Adrenal gland (tissue), 19 donors: ENCODE measurements at regions of chr3 and their contacts with region 1.

Region 1: DNA sequence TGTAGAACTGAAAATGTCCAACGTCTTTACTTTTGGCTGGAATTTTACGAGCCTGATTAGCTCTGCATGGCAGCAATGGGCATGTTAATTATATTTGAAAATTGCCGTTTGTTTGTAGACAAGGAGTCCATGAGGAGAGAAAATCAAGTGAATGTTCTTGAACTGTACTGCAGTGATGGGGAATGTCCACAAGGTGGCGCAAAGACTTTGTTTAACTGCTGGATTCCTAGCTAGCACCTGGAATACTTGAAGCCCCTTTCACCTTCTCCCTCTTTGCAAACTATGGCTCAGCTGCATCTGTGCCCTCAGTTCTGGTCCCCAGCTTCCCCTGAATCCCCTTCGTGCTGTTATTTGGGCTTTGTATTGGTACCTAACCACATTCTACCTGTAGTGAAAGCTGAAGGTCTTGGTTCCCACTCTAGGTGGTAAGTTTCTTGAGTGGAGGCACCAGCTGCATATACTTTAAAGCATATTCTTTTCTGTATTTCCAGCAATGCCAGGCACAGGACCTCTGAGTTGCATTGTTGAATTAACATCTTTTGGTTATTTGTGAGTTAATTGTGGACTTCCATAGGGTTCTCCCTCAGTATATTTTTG is 25.3 kb downstream of the EXOG start:
- DNase-seq: peak; percentile 54 to 90 (median 72)
- H3K4me3 ChIP-seq: no peak overlapping the region
- H3K27ac ChIP-seq: no peak overlapping the region
- H3K4me1 ChIP-seq: no peaks in the 10 kb centered on the region
- H3K27me3 ChIP-seq: no peaks in the 10 kb centered on the region
- CTCF ChIP-seq: peak; percentile 81 to 94 (median 86)
- POLR2A ChIP-seq: no peak

Region 2: GRCh38 chr3:38651154-38651789 is 129.8 kb after region 1 on chr3:
- intact Hi-C with region 1: loop called (anchors 5 to 10 kb)
- DNase-seq: peak; percentile 51 to 83 (median 73)
- H3K4me3 ChIP-seq: no peak overlapping the region
- H3K27ac ChIP-seq: no peak overlapping the region
- H3K4me1 ChIP-seq: peaks cover 6 to 10% of the 10 kb centered on the region in 2 donors
- H3K27me3 ChIP-seq: peaks cover 26% of the 10 kb centered on the region
- CTCF ChIP-seq: peak; percentile 87 to 94 (median 92)
- POLR2A ChIP-seq: no peak

Region 3: GRCh38 chr3:39000008-39000450 is 478.5 kb after region 1 on chr3:
- intact Hi-C with region 1: loop called in 1 of 2 experiments (anchors 10 kb)
- DNase-seq: no peak
- H3K4me3 ChIP-seq: no peak overlapping the region
- H3K27ac ChIP-seq: no peak overlapping the region
- H3K4me1 ChIP-seq: no peaks in the 10 kb centered on the region
- H3K27me3 ChIP-seq: no peaks in the 10 kb centered on the region
- CTCF ChIP-seq: peak; percentile 57 to 84 (median 67)
- POLR2A ChIP-seq: no peak